Stomach (tissue), 19 donors: ENCODE measurements at regions of chr2 and their contacts with region 1.

Region 1: DNA sequence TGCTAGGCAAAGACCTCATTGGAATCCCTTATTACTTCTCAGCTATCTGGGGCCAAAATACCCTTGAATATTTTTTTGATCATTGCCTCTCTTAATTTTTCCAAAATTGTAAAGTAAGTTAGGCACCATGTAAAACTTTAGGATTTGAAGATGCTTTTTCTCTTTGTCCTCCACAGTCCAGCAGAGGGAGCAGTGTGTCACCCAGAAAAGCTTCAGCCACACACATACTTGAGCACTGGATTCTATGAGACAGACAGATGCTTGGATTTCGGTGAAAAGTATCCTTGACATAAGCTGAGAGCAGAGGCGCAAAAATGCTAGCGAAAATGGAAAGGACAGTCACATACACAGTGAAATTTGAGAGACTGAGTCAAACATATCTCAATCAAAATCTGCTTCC is 74.7 kb upstream of the KCNJ3 start:
- DNase-seq: peak; percentile 49 to 80
- H3K4me3 ChIP-seq: no peak overlapping the region
- H3K27ac ChIP-seq: no peak overlapping the region
- H3K4me1 ChIP-seq: no peaks in the 10 kb centered on the region
- H3K27me3 ChIP-seq: no peaks in the 10 kb centered on the region
- CTCF ChIP-seq: peak in 5 of 7 experiments; percentile 43 to 57 (median 53)
- EP300 ChIP-seq: no peak
- POLR2A ChIP-seq: no peak

Region 2: DNA sequence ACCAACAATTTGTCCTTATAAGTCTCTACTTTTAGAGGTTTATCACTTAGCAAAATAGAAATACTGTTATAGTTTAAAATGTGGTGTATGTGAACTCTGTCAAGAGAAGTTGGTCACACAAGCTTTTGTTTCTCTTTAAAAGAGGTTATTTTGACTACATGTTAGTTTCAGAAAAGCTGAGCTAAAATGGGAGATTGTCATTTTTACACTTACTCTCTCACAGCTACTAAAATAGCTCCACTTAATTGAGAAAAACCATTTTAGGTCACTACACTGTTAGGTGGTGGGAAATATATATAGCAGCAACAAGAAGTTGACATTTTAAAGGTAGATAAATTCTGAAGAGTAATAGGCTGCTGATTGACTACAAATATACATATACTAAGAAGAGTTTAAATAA is 86.8 kb before region 1 on chr2:
- intact Hi-C with region 1: no loop called
- DNase-seq: no peak
- H3K4me3 ChIP-seq: no peak overlapping the region
- H3K27ac ChIP-seq: no peak overlapping the region
- H3K4me1 ChIP-seq: no peaks in the 10 kb centered on the region
- H3K27me3 ChIP-seq: no peaks in the 10 kb centered on the region
- CTCF ChIP-seq: no peak
- EP300 ChIP-seq: no peak
- POLR2A ChIP-seq: no peak

Region 3: DNA sequence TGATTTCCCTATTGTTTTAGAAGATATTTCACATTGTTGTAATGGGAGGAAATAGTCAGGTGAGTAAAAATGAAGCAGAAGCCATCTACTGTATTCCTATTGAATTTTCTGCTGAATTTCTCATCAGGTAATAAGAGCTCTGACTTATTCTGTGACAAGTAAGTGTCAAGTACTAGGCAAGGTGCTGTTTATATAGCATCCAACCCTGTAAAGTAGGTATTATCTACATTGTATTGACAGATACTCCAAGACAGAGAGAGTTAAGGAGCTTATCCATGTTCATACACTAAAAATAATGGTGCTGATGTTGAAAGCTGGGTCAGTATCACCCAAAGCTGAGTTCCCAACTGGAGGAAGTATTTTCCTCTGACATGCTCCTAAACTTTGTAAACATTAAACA is 180.6 kb after region 1 on chr2:
- intact Hi-C with region 1: no loop called
- DNase-seq: no peak
- H3K4me3 ChIP-seq: no peak overlapping the region
- H3K27ac ChIP-seq: no peak overlapping the region
- H3K4me1 ChIP-seq: no peaks in the 10 kb centered on the region
- H3K27me3 ChIP-seq: no peaks in the 10 kb centered on the region
- CTCF ChIP-seq: no peak
- EP300 ChIP-seq: no peak
- POLR2A ChIP-seq: no peak

Region 4: DNA sequence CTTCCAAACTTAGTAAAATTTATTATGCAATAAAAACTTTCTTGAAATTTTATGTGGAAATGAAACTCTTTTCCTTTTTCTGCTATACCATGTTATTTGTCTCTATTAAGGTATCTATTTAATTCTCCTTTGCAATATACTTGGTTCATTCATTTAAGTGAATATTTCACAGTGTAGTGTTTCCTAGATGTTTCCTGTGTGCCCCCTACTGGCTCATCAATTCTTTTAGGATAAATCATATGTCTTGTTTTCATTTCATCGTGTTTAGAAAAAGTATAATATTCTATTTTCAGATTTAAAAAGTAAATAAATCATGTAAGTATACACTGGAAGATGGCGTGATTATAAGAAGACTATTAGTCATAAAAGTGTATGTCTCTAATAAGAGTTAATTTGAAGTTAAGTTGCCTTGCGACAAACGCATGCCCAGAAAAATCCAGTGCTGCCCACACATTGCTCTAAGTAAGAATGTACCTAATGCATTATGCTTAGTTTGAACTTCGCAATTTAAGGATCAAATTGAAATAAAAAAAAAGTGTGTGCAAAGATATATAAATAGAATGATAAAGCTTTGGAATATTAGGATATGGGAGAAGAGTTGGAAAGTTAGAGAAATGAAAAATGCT is 600.1 kb after region 1 on chr2:
- intact Hi-C with region 1: loop called (anchors 10 kb)
- DNase-seq: peak in 1 of 2 donors; percentile 54
- H3K4me3 ChIP-seq: no peak overlapping the region
- H3K27ac ChIP-seq: no peak overlapping the region
- H3K4me1 ChIP-seq: no peaks in the 10 kb centered on the region
- H3K27me3 ChIP-seq: no peaks in the 10 kb centered on the region
- CTCF ChIP-seq: peak in 2 of 7 experiments; percentile 29 to 33
- EP300 ChIP-seq: no peak
- POLR2A ChIP-seq: no peak

Region 5: GRCh38 chr2:155930312-155930711 is 1306.5 kb after region 1 on chr2:
- intact Hi-C with region 1: no loop called
- DNase-seq: no peak
- H3K4me3 ChIP-seq: no peak overlapping the region
- H3K27ac ChIP-seq: no peak overlapping the region
- H3K4me1 ChIP-seq: no peaks in the 10 kb centered on the region
- H3K27me3 ChIP-seq: no peaks in the 10 kb centered on the region
- CTCF ChIP-seq: no peak
- EP300 ChIP-seq: no peak
- POLR2A ChIP-seq: no peak